Mammary epithelial cell (primary cell): ENCODE measurements at regions of chr7 and their contacts with region 1.

Region 1: DNA sequence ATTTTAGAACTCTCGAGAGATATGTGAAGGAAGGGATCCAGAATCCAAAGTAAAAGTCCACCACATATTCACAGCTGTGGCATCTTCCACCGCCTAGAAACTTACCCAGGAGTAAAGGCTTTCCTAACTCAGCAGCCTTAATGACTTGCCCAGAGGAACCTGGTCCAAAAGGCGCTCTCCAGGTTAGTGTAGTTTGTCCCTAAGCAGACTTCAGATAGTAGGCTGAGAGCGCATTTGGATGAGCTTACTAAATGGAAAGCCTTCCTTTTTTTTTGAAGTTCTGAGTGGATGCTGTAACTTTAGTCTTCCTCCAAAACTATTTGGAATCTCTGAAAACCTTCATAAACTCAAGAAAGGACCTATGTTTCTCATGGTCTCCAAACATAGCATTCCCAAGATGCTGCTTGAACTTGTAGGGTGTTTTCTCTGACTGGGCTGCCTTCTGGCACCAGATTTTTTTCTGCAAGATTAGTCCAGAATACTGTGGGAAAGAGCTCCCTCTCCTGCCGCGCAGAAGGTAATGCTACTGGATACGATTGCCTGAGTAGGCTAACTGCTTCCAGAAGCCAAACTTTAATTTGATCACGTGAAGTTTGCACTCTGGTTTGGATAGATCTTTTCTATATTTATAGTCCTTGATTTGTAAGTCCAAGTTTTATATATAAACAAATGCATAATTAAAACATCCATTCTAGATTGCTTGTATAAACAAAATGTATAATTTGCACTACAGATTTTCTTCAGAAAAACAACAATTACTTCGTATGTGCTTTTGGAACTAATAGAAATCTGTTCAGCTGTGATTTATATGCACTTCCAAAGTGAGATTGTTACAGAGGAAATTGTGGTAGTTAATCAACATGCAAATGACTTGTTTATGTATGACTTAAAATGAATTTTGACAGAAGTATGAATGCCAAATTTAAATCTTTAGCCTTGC is 19.6 kb upstream of the GPR37 start:
- DNase-seq: peak; percentile 30
- H3K4me3 ChIP-seq: no peak overlapping the region
- H3K27ac ChIP-seq: no peak overlapping the region
- H3K4me1 ChIP-seq: no peaks in the 10 kb centered on the region
- H3K27me3 ChIP-seq: peaks cover 2% of the 10 kb centered on the region
- CTCF ChIP-seq: peak; percentile 87 to 90

Region 2: DNA sequence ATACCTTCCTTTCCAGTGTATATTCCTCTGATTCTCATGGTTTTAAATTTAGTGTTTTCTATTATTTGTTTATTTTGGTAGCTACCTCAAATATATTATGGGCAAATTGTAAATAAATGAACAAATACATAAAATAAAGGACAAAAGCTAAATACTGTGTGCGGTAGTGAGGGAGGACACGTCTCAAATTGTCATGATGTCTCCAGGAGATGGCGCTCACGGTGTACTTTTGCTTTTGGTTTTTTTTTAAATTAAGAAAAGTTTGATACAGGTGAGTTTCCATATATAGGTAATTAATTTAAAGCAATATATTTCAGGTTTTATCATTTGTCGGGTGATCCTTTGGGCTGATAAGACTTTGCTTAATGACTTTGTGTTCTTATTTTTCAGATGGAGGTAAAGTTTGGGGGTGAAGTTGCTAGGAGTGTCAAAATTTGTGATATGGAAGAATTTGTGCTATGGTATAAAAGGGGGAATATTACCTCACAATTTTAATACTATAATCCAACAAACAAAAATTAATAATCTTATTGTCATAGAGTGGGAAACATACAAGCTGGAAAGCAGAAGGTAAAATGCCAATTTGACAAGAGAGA is 683.9 kb before region 1 on chr7:
- CTCF ChIA-PET with region 1: no interaction called
- dilution Hi-C with region 1: no loop called
- in situ Hi-C with region 1: no loop called
- intact Hi-C with region 1: loop called (anchors 1 kb)
- DNase-seq: no peak
- H3K4me3 ChIP-seq: no peak overlapping the region
- H3K27ac ChIP-seq: no peak overlapping the region
- H3K4me1 ChIP-seq: no peaks in the 10 kb centered on the region
- H3K27me3 ChIP-seq: no peaks in the 10 kb centered on the region
- CTCF ChIP-seq: peak; percentile 35 to 57

Region 3: GRCh38 chr7:124171068-124171467 is 614.1 kb before region 1 on chr7:
- CTCF ChIA-PET with region 1: no interaction called
- dilution Hi-C with region 1: loop called (anchors 25 kb)
- in situ Hi-C with region 1: loop called in 1 of 2 experiments (anchors 10 kb)
- intact Hi-C with region 1: loop called (anchors 1 kb)
- DNase-seq: peak; percentile 6
- H3K4me3 ChIP-seq: no peak overlapping the region
- H3K27ac ChIP-seq: no peak overlapping the region
- H3K4me1 ChIP-seq: no peaks in the 10 kb centered on the region
- H3K27me3 ChIP-seq: no peaks in the 10 kb centered on the region
- CTCF ChIP-seq: peak; percentile 42 to 69

Region 4: GRCh38 chr7:124276019-124276622 is 509.0 kb before region 1 on chr7:
- CTCF ChIA-PET with region 1: no interaction called
- dilution Hi-C with region 1: no loop called
- in situ Hi-C with region 1: no loop called
- intact Hi-C with region 1: loop called (anchors 1 kb)
- DNase-seq: peak; percentile 14
- H3K4me3 ChIP-seq: no peak overlapping the region
- H3K27ac ChIP-seq: no peak overlapping the region
- H3K4me1 ChIP-seq: no peaks in the 10 kb centered on the region
- H3K27me3 ChIP-seq: peaks cover 1% of the 10 kb centered on the region
- CTCF ChIP-seq: peak; percentile 63 to 69